T-cell (primary cell): ENCODE measurements at regions of chr5 and their contacts with region 1.

Region 1: GRCh38 chr5:111143910-111144309 is 51.8 kb downstream of the WDR36 start:
- DNase-seq: no peak
- ATAC-seq: no peak
- H3K4me3 ChIP-seq: no peak overlapping the region
- H3K4me3 Mint-ChIP-seq: no peak overlapping the region
- H3K27ac ChIP-seq: no peak overlapping the region
- H3K27ac Mint-ChIP-seq: no peak overlapping the region
- H3K4me1 ChIP-seq: no peaks in the 10 kb centered on the region
- H3K4me1 Mint-ChIP-seq: no peaks in the 10 kb centered on the region
- H3K27me3 ChIP-seq: no peaks in the 10 kb centered on the region
- H3K27me3 Mint-ChIP-seq: no peaks in the 10 kb centered on the region

Region 2: GRCh38 chr5:111061618-111062017 is 82.3 kb before region 1 on chr5:
- CTCF ChIA-PET with region 1: no interaction called
- POLR2A ChIA-PET with region 1: no interaction called
- DNase-seq: no peak
- ATAC-seq: no peak
- H3K4me3 ChIP-seq: no peak overlapping the region
- H3K4me3 Mint-ChIP-seq: no peak overlapping the region
- H3K27ac ChIP-seq: no peak overlapping the region
- H3K27ac Mint-ChIP-seq: no peak overlapping the region
- H3K4me1 ChIP-seq: no peaks in the 10 kb centered on the region
- H3K4me1 Mint-ChIP-seq: no peaks in the 10 kb centered on the region
- H3K27me3 ChIP-seq: peaks cover 5 to 7% of the 10 kb centered on the region in 2 experiments
- H3K27me3 Mint-ChIP-seq: peaks cover 35 to 53% of the 10 kb centered on the region in 2 donors

Region 3: DNA sequence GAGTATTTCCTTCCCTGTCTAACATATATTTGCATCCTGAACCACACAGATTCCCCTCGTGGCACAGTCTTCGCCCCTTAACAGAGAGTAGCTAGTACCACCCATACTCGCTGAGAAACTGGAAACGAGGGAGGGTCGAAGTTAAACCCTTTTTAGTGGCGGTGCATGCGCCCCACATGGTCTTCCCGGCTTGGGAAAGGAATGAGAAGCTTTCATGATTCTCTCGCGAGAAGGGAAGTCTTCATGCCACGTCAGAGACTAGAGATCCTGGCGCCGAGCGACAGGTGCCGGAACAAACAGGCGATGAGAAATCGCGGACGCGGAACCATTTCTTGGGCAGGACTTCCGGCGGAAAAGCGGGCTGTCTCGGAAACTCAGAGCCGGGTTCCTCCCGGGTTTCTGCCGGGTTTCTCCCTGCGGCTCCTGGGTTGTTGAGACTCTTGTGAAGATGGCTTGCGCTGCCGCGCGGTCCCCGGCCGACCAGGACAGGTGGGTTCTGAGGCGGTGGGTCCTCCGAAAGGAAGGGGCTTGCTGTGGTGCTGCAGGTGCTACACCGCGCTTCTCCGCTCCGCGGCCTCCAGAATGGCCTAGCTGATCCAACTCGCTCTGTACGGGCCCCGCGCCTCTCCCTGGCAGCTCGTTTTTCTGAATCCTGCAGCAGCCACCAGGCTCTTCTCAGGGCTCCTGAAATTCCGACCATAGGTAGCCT is 1717.2 kb after region 1 on chr5 and contains the start of gene SRP19:
- CTCF ChIA-PET with region 1: no interaction called
- POLR2A ChIA-PET with region 1: interaction called in 1 of 2 experiments, 10 read pairs
- DNase-seq: peak; percentile 78 to 95 (median 88)
- ATAC-seq: peak; percentile 95 to 98 (median 97)
- H3K4me3 ChIP-seq: peak within 1 kb of the TSS; percentile 89 to 94
- H3K4me3 Mint-ChIP-seq: peak within 1 kb of the TSS; percentile 95 to 98 (median 97)
- H3K27ac ChIP-seq: peak within 1 kb of the TSS; percentile 89
- H3K27ac Mint-ChIP-seq: peak within 1 kb of the TSS; percentile 96 to 97
- H3K4me1 ChIP-seq: peaks cover 17 to 28% of the 10 kb centered on the region in 2 experiments
- H3K4me1 Mint-ChIP-seq: peaks cover 32 to 37% (median 36%) of the 10 kb centered on the region in 3 donors
- H3K27me3 ChIP-seq: peaks cover 0 to under 1% of the 10 kb centered on the region in 2 experiments
- H3K27me3 Mint-ChIP-seq: peaks cover 6 to 10% of the 10 kb centered on the region in 2 donors
- total RNA-seq, gene SRP19: 34.6 to 44.9 (median 40.4) TPM